Naive thymus-derived CD4-positive, alpha-beta T cell (primary cell): ENCODE measurements at regions of chr12 and their contacts with region 1.

Region 1: GRCh38 chr12:56299853-56300643 is at the start of gene CS:
- DNase-seq: peak; percentile 95 to 99 (median 98)
- ATAC-seq: peak; percentile 98
- H3K4me3 ChIP-seq: peak within 1 kb of the TSS; percentile 73
- H3K4me3 Mint-ChIP-seq: peak within 1 kb of the TSS; percentile 93 to 100 (median 96)
- H3K27ac ChIP-seq: peak within 1 kb of the TSS; percentile 94
- H3K27ac Mint-ChIP-seq: peak within 1 kb of the TSS; percentile 93 to 99 (median 97)
- H3K4me1 ChIP-seq: peaks cover 26 to 48% of the 10 kb centered on the region in 2 donors
- H3K4me1 Mint-ChIP-seq: peaks cover 27 to 58% (median 53%) of the 10 kb centered on the region in 7 donors
- H3K27me3 ChIP-seq: no peaks in the 10 kb centered on the region
- H3K27me3 Mint-ChIP-seq: no peaks in the 10 kb centered on the region
- total RNA-seq, gene CS: 126 to 241 (median 167) TPM

Region 2: GRCh38 chr12:55817346-55818139 is 482.5 kb before region 1 on chr12 and contains the starts of genes ORMDL2 and SARNP:
- CTCF ChIA-PET with region 1: no interaction called
- POLR2A ChIA-PET with region 1: no interaction called
- intact Hi-C with region 1: loop called in 1 of 2 experiments (anchors 1 kb)
- DNase-seq: peak; percentile 81 to 99 (median 98)
- ATAC-seq: peak; percentile 96
- H3K4me3 ChIP-seq: peak within 1 kb of the TSS; percentile 94
- H3K4me3 Mint-ChIP-seq: no peak within 1 kb of the TSS
- H3K27ac ChIP-seq: peak within 1 kb of the TSS; percentile 88
- H3K27ac Mint-ChIP-seq: no peak within 1 kb of the TSS
- H3K4me1 ChIP-seq: peaks cover 22 to 41% of the 10 kb centered on the region in 2 donors
- H3K4me1 Mint-ChIP-seq: peaks cover 32 to 45% (median 37%) of the 10 kb centered on the region in 7 donors
- H3K27me3 ChIP-seq: no peaks in the 10 kb centered on the region
- H3K27me3 Mint-ChIP-seq: no peaks in the 10 kb centered on the region
- total RNA-seq, gene ORMDL2: 12.3 to 67.3 (median 40.5) TPM
- total RNA-seq, gene SARNP: 28.0 to 73.0 (median 41.7) TPM

Region 3: DNA sequence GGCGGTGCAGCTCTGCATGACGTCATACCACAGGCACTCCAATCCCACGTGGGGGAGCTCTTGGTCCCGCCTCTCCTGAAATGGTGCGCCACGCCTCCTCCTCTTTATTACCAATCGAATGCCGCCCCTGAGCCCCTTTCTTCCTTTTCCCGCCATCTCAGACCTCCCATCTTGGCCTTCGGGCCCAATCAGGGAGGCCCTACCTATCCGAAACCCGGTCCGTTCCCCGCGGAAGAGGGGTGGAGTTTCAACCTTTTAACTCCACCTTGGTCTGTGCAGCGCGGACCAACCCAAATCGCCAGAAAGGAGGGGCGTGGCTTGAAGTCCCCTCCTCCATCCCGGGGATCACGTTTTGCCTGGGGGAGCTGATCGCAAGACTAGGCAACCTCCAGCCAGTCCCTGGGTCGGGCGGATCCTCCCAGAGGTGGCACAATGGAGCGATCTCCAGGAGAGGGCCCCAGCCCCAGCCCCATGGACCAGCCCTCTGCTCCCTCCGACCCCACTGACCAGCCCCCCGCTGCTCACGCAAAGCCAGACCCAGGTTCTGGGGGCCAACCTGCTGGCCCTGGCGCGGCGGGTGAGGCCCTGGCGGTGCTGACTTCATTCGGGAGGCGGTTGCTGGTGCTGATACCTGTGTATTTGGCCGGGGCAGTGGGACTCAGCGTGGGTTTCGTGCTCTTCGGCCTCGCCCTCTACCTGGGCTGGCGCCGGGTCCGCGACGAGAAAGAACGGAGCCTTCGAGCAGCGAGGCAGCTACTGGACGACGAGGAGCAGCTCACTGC is 172.0 kb before region 1 on chr12 and contains the start of gene ESYT1:
- CTCF ChIA-PET with region 1: no interaction called
- POLR2A ChIA-PET with region 1: no interaction called
- intact Hi-C with region 1: loop called in 1 of 2 experiments (anchors 1 kb)
- DNase-seq: peak; percentile 75 to 100 (median 98)
- ATAC-seq: peak; percentile 94
- H3K4me3 ChIP-seq: peak within 1 kb of the TSS; percentile 77
- H3K4me3 Mint-ChIP-seq: peak within 1 kb of the TSS; percentile 95 to 100 (median 98)
- H3K27ac ChIP-seq: peak within 1 kb of the TSS; percentile 84
- H3K27ac Mint-ChIP-seq: peak within 1 kb of the TSS; percentile 86 to 99 (median 91)
- H3K4me1 ChIP-seq: peaks cover 39 to 54% of the 10 kb centered on the region in 2 donors
- H3K4me1 Mint-ChIP-seq: peaks cover 40 to 76% (median 65%) of the 10 kb centered on the region in 7 donors
- H3K27me3 ChIP-seq: no peaks in the 10 kb centered on the region
- H3K27me3 Mint-ChIP-seq: no peaks in the 10 kb centered on the region
- total RNA-seq, gene ESYT1: 121 to 300 (median 221) TPM

Region 4: GRCh38 chr12:56224102-56224701 is 75.8 kb before region 1 on chr12 and contains the start of gene NABP2:
- CTCF ChIA-PET with region 1: interaction called, 3 read pairs
- POLR2A ChIA-PET with region 1: interaction called, 18 read pairs
- intact Hi-C with region 1: loop called (anchors 1 kb)
- DNase-seq: peak; percentile 78 to 97 (median 81)
- ATAC-seq: peak; percentile 85
- H3K4me3 ChIP-seq: peak within 1 kb of the TSS; percentile 82
- H3K4me3 Mint-ChIP-seq: peak within 1 kb of the TSS; percentile 77 to 99 (median 87)
- H3K27ac ChIP-seq: peak within 1 kb of the TSS; percentile 98
- H3K27ac Mint-ChIP-seq: peak within 1 kb of the TSS; percentile 78 to 100 (median 91)
- H3K4me1 ChIP-seq: peaks cover 22 to 27% of the 10 kb centered on the region in 2 donors
- H3K4me1 Mint-ChIP-seq: peaks cover 16 to 57% (median 46%) of the 10 kb centered on the region in 7 donors
- H3K27me3 ChIP-seq: no peaks in the 10 kb centered on the region
- H3K27me3 Mint-ChIP-seq: peaks cover 0 to 3% (median 0%) of the 10 kb centered on the region in 5 donors
- total RNA-seq, gene NABP2: 9.2 to 61.2 (median 11.8) TPM

Region 5: GRCh38 chr12:56286044-56286830 is 13.8 kb before region 1 on chr12:
- CTCF ChIA-PET with region 1: no interaction called
- POLR2A ChIA-PET with region 1: interaction called, 10 read pairs
- intact Hi-C with region 1: loop called (anchors 1 kb)
- DNase-seq: no peak
- ATAC-seq: no peak
- H3K4me3 ChIP-seq: no peak overlapping the region
- H3K4me3 Mint-ChIP-seq: no peak overlapping the region
- H3K27ac ChIP-seq: no peak overlapping the region
- H3K27ac Mint-ChIP-seq: peak overlapping the region in 4 of 9 donors; percentile 17 to 65 (median 32)
- H3K4me1 ChIP-seq: peaks cover 2 to 6% of the 10 kb centered on the region in 2 donors
- H3K4me1 Mint-ChIP-seq: peaks cover 3 to 24% (median 18%) of the 10 kb centered on the region in 7 donors
- H3K27me3 ChIP-seq: no peaks in the 10 kb centered on the region
- H3K27me3 Mint-ChIP-seq: no peaks in the 10 kb centered on the region

Region 6: GRCh38 chr12:56359851-56360767 is 60.1 kb after region 1 on chr12 and contains the start of gene STAT2:
- CTCF ChIA-PET with region 1: no interaction called
- POLR2A ChIA-PET with region 1: interaction called, 12 read pairs
- intact Hi-C with region 1: loop called (anchors 1 kb)
- DNase-seq: peak; percentile 94 to 100 (median 99)
- ATAC-seq: peak; percentile 97
- H3K4me3 ChIP-seq: peak within 1 kb of the TSS; percentile 89
- H3K4me3 Mint-ChIP-seq: peak within 1 kb of the TSS; percentile 83 to 99 (median 96)
- H3K27ac ChIP-seq: peak within 1 kb of the TSS; percentile 79
- H3K27ac Mint-ChIP-seq: peak within 1 kb of the TSS; percentile 90 to 98 (median 96)
- H3K4me1 ChIP-seq: peaks cover 16 to 17% of the 10 kb centered on the region in 2 donors
- H3K4me1 Mint-ChIP-seq: peaks cover 14 to 40% (median 27%) of the 10 kb centered on the region in 7 donors
- H3K27me3 ChIP-seq: no peaks in the 10 kb centered on the region
- H3K27me3 Mint-ChIP-seq: no peaks in the 10 kb centered on the region
- total RNA-seq, gene STAT2: 119 to 291 (median 182) TPM